Breast epithelium (tissue), 4 donors: ENCODE measurements at regions of chr1 and their contacts with region 1.

Region 1: GRCh38 chr1:14929547-14930246 is 223.8 kb upstream of the TMEM51 start:
- DNase-seq: peak in 1 of 2 donors; percentile 64
- H3K4me3 ChIP-seq: peak overlapping the region in 1 of 3 donors; percentile 41
- H3K27ac ChIP-seq: peak overlapping the region; percentile 73 to 80
- H3K4me1 ChIP-seq: peaks cover 0 to 18% of the 10 kb centered on the region in 2 donors
- H3K27me3 ChIP-seq: no peaks in the 10 kb centered on the region
- CTCF ChIP-seq: no peak
- POLR2A ChIP-seq: no peak

Region 2: GRCh38 chr1:14915356-14916054 is 14.2 kb before region 1 on chr1:
- intact Hi-C with region 1: no loop called
- DNase-seq: peak in 1 of 2 donors; percentile 30
- H3K4me3 ChIP-seq: no peak overlapping the region
- H3K27ac ChIP-seq: peak overlapping the region in 1 of 2 donors; percentile 33
- H3K4me1 ChIP-seq: peaks cover 10 to 13% of the 10 kb centered on the region in 2 donors
- H3K27me3 ChIP-seq: no peaks in the 10 kb centered on the region
- CTCF ChIP-seq: peak; percentile 64 to 72 (median 65)
- POLR2A ChIP-seq: no peak

Region 3: GRCh38 chr1:16206547-16207317 is 1277.0 kb after region 1 on chr1:
- intact Hi-C with region 1: loop called (anchors 5 kb)
- DNase-seq: peak; percentile 97
- H3K4me3 ChIP-seq: peak overlapping the region; percentile 48 to 75 (median 69)
- H3K27ac ChIP-seq: peak overlapping the region; percentile 87 to 92
- H3K4me1 ChIP-seq: peaks cover 0 to 15% of the 10 kb centered on the region in 2 donors
- H3K27me3 ChIP-seq: no peaks in the 10 kb centered on the region
- CTCF ChIP-seq: no peak
- POLR2A ChIP-seq: no peak